ENCODE measurements at regions of chr3 and their contacts with region 1.

Region 1: DNA sequence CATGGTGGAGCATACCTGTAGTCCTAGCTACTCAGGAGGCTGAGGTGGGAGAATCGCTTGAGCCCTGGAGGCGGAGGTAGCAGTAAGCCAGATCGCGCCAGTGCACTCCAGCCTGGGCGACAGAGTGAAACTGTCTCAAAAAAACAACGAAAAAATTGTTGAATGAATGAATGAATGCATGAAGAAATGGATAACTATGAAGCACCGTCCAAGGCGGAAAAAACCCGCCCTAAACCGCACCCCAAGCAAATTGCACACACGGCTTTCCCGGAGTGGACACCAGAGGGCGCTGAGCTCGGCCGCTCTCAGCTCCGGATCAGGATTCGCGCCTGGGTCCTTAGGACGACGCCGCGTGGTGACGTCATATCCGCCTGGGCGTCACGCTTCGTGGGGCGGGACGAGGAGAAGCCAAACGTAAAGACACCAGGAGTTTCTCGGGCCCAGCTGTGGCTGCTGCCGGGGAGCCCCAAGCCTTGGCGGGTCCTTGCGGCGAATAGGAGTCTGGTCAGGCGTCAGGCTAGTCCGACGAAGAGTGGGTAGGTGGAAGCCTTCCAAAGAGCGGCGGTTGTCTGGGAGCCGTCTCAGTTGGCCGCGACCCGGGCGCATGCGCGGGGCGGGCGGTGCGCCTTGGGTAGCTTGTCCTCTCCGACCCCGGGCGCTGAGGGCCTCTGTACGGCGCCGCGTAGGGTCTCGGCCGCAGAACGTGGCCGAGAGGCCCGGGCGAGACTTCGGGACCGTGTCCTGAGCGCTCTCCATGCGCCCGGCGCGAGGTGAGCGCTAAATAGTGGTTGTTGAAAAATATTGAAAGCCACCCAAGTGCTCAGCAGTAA is at the starts of genes HTD2 and RPP14:
- DNase-seq: peak; percentile 99
- H3K4me3 Mint-ChIP-seq: peak within 1 kb of the TSS; percentile 94
- H3K27ac Mint-ChIP-seq: peak within 1 kb of the TSS; percentile 98
- H3K4me1 Mint-ChIP-seq: peaks cover 37% of the 10 kb centered on the region
- H3K27me3 Mint-ChIP-seq: peaks cover 5% of the 10 kb centered on the region
- total RNA-seq, gene HTD2: 6.3 to 8.5 TPM
- total RNA-seq, gene RPP14: 10.7 to 11.2 TPM

Region 2: DNA sequence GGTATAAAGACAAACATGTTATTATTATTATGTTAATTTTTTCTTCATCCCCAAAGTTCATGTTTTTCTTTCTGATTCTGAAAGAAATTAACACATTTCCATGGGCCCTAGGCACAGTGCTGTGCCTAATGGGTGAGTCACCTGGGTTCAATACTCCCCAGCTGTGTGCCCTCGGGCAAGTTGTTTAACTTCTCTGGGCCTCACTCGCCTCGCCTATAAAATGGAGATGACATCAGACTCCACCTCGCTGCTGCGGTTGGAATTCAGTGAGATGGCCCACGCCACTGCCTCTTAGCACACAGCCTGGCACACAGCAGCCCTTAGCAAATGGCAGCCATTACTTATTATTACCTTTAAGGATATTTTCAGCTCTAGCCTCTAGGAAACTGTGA is 117.9 kb before region 1 on chr3:
- CTCF ChIA-PET with region 1: interaction called, 41 read pairs
- POLR2A ChIA-PET with region 1: no interaction called
- DNase-seq: no peak
- H3K4me3 Mint-ChIP-seq: no peak overlapping the region
- H3K27ac Mint-ChIP-seq: no peak overlapping the region
- H3K4me1 Mint-ChIP-seq: no peaks in the 10 kb centered on the region
- H3K27me3 Mint-ChIP-seq: no peaks in the 10 kb centered on the region

Region 3: DNA sequence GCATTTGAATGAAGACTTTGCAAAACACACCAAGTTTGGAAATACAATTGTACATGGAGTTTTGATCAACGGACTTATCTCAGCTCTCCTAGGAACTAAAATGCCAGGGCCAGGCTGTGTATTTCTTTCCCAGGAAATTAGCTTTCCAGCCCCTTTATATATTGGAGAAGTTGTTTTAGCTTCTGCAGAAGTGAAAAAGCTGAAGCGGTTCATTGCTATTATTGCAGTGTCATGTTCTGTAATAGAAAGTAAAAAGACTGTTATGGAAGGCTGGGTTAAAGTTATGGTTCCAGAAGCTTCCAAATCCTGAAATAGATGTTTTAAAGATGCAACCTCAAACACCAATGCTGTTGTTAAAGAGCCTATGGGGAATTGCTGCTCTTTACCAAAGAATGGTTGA is 11.7 kb after region 1 on chr3:
- CTCF ChIA-PET with region 1: interaction called, 49 read pairs
- POLR2A ChIA-PET with region 1: interaction called, 9 read pairs
- DNase-seq: no peak
- H3K4me3 Mint-ChIP-seq: no peak overlapping the region
- H3K27ac Mint-ChIP-seq: no peak overlapping the region
- H3K4me1 Mint-ChIP-seq: no peaks in the 10 kb centered on the region
- H3K27me3 Mint-ChIP-seq: no peaks in the 10 kb centered on the region

Region 4: DNA sequence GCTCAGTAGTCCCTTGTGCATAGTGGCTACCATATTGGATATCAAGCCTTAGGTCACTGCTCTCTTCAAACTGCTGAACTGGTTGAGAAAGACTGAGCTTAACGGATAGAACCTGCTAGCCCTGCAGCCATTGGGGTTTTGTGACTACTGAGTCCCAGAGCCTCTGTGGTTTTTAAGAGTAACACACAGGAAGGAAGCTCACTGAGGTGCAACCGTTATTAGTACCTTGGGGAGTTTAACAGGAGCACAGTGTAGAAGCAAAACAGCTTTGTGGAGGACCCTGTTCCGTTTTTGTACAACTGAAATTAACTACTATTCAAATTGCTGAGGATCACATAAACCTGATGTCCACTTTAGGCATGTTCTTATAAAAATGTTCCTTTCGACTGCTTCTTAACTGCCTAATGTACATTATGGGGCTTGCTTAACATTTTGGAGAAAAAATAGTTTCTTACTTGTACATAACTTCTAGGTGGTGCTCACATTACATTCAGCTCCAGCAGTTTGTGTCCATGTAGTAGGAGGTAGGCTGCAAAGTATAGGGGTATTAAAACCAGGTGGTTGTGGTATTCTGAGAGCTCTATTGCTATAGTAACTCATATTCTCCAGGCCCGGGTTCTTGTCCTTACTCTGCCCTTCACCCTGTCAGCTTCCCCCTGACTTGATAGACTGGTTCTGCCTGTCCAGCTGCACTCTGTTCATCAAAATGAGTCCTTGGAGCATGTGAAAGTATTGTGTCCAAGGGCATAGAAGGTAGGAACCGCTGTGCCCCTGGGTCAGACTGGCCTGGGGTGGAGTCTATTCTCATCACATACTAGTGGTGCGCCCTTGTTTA is 43.9 kb after region 1 on chr3:
- CTCF ChIA-PET with region 1: interaction called, 20 read pairs
- POLR2A ChIA-PET with region 1: interaction called, 9 read pairs
- DNase-seq: peak; percentile 46
- H3K4me3 Mint-ChIP-seq: no peak overlapping the region
- H3K27ac Mint-ChIP-seq: peak overlapping the region; percentile 83
- H3K4me1 Mint-ChIP-seq: peaks cover 83% of the 10 kb centered on the region
- H3K27me3 Mint-ChIP-seq: no peaks in the 10 kb centered on the region

Region 5: DNA sequence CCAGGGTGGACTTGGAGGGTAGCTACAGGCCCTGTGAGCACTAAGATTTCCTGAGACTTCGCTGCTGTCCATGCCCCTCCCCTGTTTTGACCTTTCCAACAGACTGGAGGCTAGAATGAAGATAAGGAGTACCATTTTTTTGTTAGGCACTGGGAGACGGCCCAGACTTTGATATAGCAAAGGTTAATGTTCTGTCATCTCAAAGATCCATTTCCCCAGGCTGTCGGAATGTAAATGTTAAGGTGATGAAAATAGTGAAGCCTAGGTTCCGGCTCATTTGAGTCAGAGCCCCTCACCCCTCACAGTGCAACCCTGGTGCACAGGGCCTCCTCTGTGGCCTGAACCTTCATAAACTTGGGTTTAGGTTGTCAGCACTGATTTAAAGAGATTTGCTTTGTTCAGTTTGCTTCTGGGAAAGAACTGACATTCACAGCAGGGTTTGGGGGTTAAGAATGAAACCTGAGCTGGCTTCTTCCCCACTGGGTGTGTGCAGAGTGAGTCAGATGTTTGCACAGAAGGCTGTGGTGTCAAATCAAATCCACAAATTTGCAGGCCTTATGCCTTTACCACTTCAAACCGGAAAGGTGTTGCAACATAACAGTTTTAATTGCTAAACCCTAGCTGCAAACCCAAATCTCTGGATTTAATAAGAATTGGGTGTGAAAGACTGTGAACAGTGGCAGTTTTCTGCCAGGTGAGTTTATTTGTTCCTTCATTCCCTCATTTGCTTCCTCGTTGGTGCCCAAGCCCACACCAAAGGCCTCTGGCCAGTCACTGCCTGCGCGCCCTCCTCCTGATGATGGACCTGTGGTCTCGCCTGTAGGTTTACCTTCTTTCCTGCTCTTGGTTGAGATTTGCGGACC is 165.2 kb after region 1 on chr3:
- CTCF ChIA-PET with region 1: interaction called, 28 read pairs
- POLR2A ChIA-PET with region 1: interaction called, 12 read pairs
- DNase-seq: peak; percentile 75
- H3K4me3 Mint-ChIP-seq: peak overlapping the region; percentile 62
- H3K27ac Mint-ChIP-seq: peak overlapping the region; percentile 89
- H3K4me1 Mint-ChIP-seq: peaks cover 61% of the 10 kb centered on the region
- H3K27me3 Mint-ChIP-seq: no peaks in the 10 kb centered on the region

Region 6: DNA sequence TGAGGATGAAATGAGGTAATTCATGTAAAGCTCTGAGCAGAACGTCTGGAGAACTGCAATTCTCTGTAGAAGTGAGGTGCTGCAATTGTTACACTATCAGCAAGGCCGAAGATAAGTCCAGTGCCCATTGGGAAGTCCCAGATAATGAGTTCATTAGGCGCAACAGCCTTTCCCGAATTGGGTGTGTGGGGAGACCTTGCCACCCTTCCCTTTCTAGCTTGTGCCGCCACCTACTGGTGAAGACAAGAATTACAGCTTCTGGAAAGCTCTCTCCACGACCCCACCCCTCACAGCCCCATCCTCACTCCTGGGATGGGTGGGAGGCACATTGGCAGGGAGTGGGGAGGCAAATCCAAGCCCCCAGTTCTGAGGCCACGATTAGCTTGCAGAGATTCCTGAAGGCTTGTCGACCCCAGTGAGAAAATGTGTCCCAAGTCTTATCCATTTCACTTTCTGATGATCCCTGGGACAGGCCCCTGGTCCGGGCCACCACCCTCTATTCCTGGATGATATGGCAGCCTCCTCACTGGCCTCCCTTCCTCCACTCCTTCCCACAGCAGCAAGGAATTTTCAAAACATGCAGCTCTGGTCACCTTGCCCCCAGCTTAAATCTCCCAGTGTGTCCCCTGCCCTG is 324.1 kb after region 1 on chr3:
- CTCF ChIA-PET with region 1: interaction called, 25 read pairs
- POLR2A ChIA-PET with region 1: interaction called, 4 read pairs
- DNase-seq: peak; percentile 57
- H3K4me3 Mint-ChIP-seq: no peak overlapping the region
- H3K27ac Mint-ChIP-seq: no peak overlapping the region
- H3K4me1 Mint-ChIP-seq: peaks cover 4% of the 10 kb centered on the region
- H3K27me3 Mint-ChIP-seq: peaks cover 7% of the 10 kb centered on the region